ENCODE measurements at regions of chr6 and their contacts with region 1.

Region 1: GRCh38 chr6:8570256-8570920 is 135.0 kb upstream of the SLC35B3 start:
- DNase-seq: no peak
- H3K4me3 ChIP-seq: no peak overlapping the region
- H3K27ac ChIP-seq: no peak overlapping the region
- H3K4me1 ChIP-seq: no peaks in the 10 kb centered on the region
- H3K27me3 ChIP-seq: no peaks in the 10 kb centered on the region
- CTCF ChIP-seq: no peak
- EP300 ChIP-seq: no peak
- POLR2A ChIP-seq: no peak
- RAD21 ChIP-seq: no peak

Region 2: DNA sequence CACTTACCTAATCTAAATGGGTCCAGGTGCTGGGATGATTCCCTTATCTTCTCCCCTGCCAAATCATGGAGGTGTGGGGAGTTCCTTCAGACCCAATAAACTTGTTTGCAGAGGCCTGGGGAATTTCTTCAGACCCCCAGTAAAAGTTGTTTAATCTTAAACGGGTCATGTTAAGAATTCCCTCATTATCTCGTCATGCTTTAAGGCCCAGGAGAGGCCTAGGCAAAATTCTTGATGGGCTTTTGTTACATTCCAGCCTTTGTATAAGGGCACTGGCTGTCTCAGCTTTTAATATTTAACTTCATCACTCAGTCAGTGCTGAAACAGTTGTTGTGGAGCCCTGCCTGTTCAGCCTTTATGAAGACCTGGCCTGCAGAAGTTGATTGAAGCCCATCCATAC is 124.0 kb before region 1 on chr6:
- CTCF ChIA-PET with region 1: no interaction called
- POLR2A ChIA-PET with region 1: no interaction called
- DNase-seq: no peak
- H3K4me3 ChIP-seq: no peak overlapping the region
- H3K27ac ChIP-seq: no peak overlapping the region
- H3K4me1 ChIP-seq: no peaks in the 10 kb centered on the region
- H3K27me3 ChIP-seq: no peaks in the 10 kb centered on the region
- CTCF ChIP-seq: no peak
- EP300 ChIP-seq: no peak
- POLR2A ChIP-seq: no peak
- RAD21 ChIP-seq: no peak

Region 3: DNA sequence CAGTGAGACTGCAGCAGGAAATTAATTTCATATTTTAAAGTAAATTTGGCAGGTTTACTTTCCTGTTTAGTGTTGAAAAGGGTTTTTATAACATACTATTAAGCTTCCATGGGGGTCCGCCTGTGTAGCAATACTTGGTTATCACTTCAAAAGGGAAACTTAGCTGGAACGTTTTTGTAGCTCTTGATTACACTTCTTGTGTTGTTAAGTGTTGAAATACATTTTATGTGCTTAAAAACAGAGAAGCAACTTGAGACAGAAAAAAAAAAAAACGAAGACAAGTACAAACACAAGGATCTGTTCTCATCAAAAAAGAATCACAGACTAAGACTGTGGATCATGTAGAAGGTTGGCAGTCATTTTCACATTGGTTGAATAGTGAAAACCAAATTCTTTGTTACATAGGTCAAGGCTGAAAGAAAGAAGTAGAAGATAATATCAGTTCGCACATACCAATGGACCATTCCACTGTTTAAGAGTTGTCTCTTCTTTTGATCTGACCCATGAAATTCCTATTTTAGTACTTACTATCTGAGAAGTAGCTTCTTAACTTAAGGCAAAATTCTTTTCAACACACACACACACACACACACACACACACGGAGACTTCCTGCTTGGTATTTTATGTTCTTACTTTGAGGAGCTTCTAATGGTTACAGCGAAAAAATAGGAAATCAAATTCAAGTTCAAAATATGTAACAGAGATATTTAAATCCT is 21.2 kb before region 1 on chr6:
- CTCF ChIA-PET with region 1: no interaction called
- POLR2A ChIA-PET with region 1: no interaction called
- DNase-seq: no peak
- H3K4me3 ChIP-seq: no peak overlapping the region
- H3K27ac ChIP-seq: no peak overlapping the region
- H3K4me1 ChIP-seq: no peaks in the 10 kb centered on the region
- H3K27me3 ChIP-seq: no peaks in the 10 kb centered on the region
- CTCF ChIP-seq: no peak
- EP300 ChIP-seq: no peak
- POLR2A ChIP-seq: no peak
- RAD21 ChIP-seq: no peak

Region 4: DNA sequence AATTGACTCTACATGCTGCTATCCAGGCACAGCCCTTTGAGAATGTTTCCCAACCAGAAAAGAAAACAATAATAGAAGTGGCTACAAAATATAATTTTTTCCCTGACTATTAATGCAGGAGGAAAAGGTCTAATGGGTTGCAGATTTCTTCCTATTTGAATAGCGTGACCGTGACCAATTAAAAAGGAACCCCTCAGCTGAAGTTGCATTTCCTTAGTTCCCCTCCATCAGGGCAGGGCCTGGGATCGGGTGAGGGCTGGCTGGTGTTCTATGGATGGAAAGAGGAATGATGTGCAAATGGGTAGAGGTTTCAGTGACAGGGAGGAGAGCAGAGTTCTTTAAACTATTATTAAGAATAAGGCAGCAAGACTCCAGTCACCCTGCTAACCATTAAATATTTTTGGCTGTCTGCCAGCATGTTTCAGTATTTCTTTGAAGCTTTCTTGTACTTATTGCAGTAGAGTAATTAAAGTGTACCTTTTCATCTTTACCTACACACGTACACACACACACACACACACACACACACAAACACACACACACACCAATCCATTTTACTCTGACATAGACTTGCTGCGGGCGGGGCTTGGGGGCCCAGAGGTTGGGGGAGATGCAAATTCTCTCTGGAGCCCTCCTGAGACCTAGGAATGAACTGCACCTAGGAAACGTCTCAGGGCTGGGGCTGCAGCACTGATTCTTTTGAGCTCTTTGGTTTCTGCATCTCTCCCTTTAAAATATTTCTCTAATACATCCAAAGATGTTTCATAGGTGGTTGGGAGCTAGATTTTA is 19.7 kb after region 1 on chr6:
- CTCF ChIA-PET with region 1: interaction called, 13 read pairs
- POLR2A ChIA-PET with region 1: no interaction called
- DNase-seq: peak in 1 of 2 experiments; percentile 50
- H3K4me3 ChIP-seq: no peak overlapping the region
- H3K27ac ChIP-seq: no peak overlapping the region
- H3K4me1 ChIP-seq: no peaks in the 10 kb centered on the region
- H3K27me3 ChIP-seq: no peaks in the 10 kb centered on the region
- CTCF ChIP-seq: peak; percentile 25 to 49 (median 45)
- EP300 ChIP-seq: no peak
- POLR2A ChIP-seq: no peak
- RAD21 ChIP-seq: peak; percentile 16 to 48; a peak in 3 of 4 replicates